AG04450 (cell line): ENCODE measurements at regions of chr6 and their contacts with region 1.

Region 1: GRCh38 chr6:12605888-12606345 is 110.7 kb upstream of the PHACTR1 start:
- DNase-seq: peak; percentile 36
- H3K4me3 ChIP-seq: no peak overlapping the region
- H3K27ac ChIP-seq: no peak overlapping the region
- H3K27me3 ChIP-seq: no peaks in the 10 kb centered on the region
- CTCF ChIP-seq: peak; percentile 82

Region 2: GRCh38 chr6:12311106-12311505 is 294.8 kb before region 1 on chr6:
- CTCF ChIA-PET with region 1: interaction called, 18 read pairs
- POLR2A ChIA-PET with region 1: no interaction called
- DNase-seq: no peak
- H3K4me3 ChIP-seq: no peak overlapping the region
- H3K27ac ChIP-seq: no peak overlapping the region
- H3K27me3 ChIP-seq: no peaks in the 10 kb centered on the region
- CTCF ChIP-seq: peak; percentile 15; the same call in 1 of the 2 replicates

Region 3: DNA sequence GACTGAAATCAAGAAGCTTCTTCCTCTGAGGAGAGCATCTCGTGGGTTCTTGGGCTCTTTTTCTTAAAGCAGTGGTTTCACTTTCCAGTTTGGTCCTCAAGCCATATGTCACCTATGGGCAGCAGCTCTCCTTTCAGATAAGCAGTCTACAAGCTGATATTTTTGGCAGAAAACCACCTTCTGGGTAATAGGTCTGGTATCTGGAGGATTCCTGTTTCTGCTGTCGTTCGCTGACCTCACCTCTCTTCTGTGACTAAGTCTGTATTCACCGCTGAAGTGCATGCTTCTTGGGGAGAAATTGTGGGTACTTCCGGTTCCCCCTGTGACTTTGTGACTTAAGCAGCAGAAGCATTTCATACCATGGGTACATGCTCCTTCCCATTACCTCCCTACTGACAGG is 122.2 kb before region 1 on chr6:
- CTCF ChIA-PET with region 1: interaction called, 13 read pairs
- POLR2A ChIA-PET with region 1: no interaction called
- DNase-seq: peak; percentile 86
- H3K4me3 ChIP-seq: peak overlapping the region; percentile 37
- H3K27ac ChIP-seq: peak overlapping the region; percentile 47
- H3K27me3 ChIP-seq: no peaks in the 10 kb centered on the region
- CTCF ChIP-seq: no peak

Region 4: DNA sequence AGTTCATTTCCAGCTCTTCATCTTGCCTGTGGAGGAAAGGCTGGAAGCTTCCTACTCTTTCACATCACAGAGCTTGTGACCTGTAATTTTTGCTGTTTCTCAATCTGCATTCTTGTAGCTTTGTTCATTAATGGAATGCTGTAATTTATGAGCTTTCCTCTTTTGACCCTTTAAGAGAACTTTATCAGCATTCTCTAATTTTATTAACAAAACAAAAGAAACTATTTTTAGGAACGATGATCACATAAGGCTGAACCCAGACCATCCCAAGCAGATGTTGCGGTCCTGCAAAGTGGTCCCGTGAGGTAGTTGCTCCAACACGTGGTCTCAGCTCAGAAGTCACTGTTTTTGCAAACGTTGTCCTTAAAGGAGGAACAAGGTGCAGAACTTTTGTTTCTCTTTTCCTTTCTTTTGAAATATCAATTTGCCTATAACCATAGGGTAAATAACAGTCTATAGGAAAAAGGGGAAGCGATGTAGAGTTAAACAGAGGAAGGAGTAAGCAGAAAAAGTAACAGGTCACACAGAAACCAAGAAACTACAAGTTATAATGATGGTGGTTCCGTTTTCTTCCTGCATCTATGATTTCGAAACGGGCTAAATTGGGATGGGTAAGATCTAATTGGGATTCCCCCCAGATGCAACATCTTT is 10.6 kb before region 1 on chr6:
- CTCF ChIA-PET with region 1: interaction called, 17 read pairs
- POLR2A ChIA-PET with region 1: no interaction called
- DNase-seq: no peak
- H3K4me3 ChIP-seq: no peak overlapping the region
- H3K27ac ChIP-seq: no peak overlapping the region
- H3K27me3 ChIP-seq: no peaks in the 10 kb centered on the region
- CTCF ChIP-seq: no peak